SK-N-SH (cell line): ENCODE measurements at regions of chr3 and their contacts with region 1.

Region 1: GRCh38 chr3:169668957-169669681 is 5.6 kb upstream of the MECOM start:
- DNase-seq: peak; percentile 89
- H3K4me3 ChIP-seq: peak overlapping the region; percentile 35 to 54
- H3K27ac ChIP-seq: no peak overlapping the region
- H3K4me1 ChIP-seq: peaks cover 6 to 9% of the 10 kb centered on the region in 2 experiments; a peak in 2 of 4 replicates
- H3K27me3 ChIP-seq: peaks cover 67% of the 10 kb centered on the region
- CTCF ChIP-seq: peak; percentile 66
- EP300 ChIP-seq: no peak
- RAD21 ChIP-seq: peak; percentile 88

Region 2: DNA sequence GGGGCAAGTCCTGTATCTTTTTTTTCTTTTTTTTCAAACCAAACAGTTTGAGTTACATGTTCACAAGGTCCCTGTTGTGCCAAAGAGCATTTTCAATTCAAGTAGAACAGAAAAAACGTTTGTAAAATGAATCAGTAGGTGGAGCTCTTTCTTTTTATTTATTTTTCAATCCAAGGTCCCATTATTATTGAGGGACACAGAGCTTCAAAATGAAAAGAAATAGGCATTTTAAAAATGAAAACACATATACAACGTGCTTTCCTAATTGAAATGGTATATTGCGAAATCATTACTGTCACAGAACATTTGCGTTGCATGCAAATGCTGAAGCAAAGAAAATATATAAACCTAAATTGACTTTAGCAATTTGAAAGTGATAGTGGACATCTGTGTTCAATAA is 716.6 kb before region 1 on chr3:
- CTCF ChIA-PET with region 1: interaction called, 10 read pairs
- POLR2A ChIA-PET with region 1: no interaction called
- DNase-seq: no peak
- H3K4me3 ChIP-seq: no peak overlapping the region
- H3K27ac ChIP-seq: no peak overlapping the region
- H3K4me1 ChIP-seq: no peaks in the 10 kb centered on the region
- H3K27me3 ChIP-seq: no peaks in the 10 kb centered on the region
- CTCF ChIP-seq: peak; percentile 56
- EP300 ChIP-seq: no peak
- RAD21 ChIP-seq: peak; percentile 50

Region 3: GRCh38 chr3:169106683-169107082 is 562.4 kb before region 1 on chr3:
- CTCF ChIA-PET with region 1: interaction called, 12 read pairs
- POLR2A ChIA-PET with region 1: no interaction called
- DNase-seq: no peak
- H3K4me3 ChIP-seq: no peak overlapping the region; a peak in 1 of 4 replicates
- H3K27ac ChIP-seq: no peak overlapping the region
- H3K4me1 ChIP-seq: peaks cover 0 to 18% of the 10 kb centered on the region in 2 experiments; a peak in 3 of 4 replicates
- H3K27me3 ChIP-seq: no peaks in the 10 kb centered on the region
- CTCF ChIP-seq: no peak
- EP300 ChIP-seq: no peak
- RAD21 ChIP-seq: no peak

Region 4: GRCh38 chr3:169149349-169149890 is 519.7 kb before region 1 on chr3:
- CTCF ChIA-PET with region 1: interaction called, 322 read pairs
- POLR2A ChIA-PET with region 1: no interaction called
- DNase-seq: peak; percentile 79
- H3K4me3 ChIP-seq: peak overlapping the region; percentile 17 to 50; a peak in 2 of 4 replicates
- H3K27ac ChIP-seq: no peak overlapping the region
- H3K4me1 ChIP-seq: peaks cover 3 to 25% of the 10 kb centered on the region in 2 experiments; a peak in 2 of 4 replicates
- H3K27me3 ChIP-seq: peaks cover 37% of the 10 kb centered on the region; the same call in 1 of the 2 replicates
- CTCF ChIP-seq: peak; percentile 77
- EP300 ChIP-seq: no peak
- RAD21 ChIP-seq: peak; percentile 81

Region 5: GRCh38 chr3:169694117-169694516 is 25.0 kb after region 1 on chr3:
- CTCF ChIA-PET with region 1: interaction called, 10 read pairs
- POLR2A ChIA-PET with region 1: no interaction called
- DNase-seq: no peak
- H3K4me3 ChIP-seq: no peak overlapping the region
- H3K27ac ChIP-seq: no peak overlapping the region
- H3K4me1 ChIP-seq: no peaks in the 10 kb centered on the region
- H3K27me3 ChIP-seq: no peaks in the 10 kb centered on the region
- CTCF ChIP-seq: no peak
- EP300 ChIP-seq: no peak
- RAD21 ChIP-seq: no peak